ENCODE measurements at regions of chr19 and their contacts with region 1.

Region 1: GRCh38 chr19:17075035-17075863 is at the starts of genes HAUS8 and MYO9B:
- DNase-seq: peak; percentile 99 to 100
- H3K4me3 ChIP-seq: peak within 1 kb of the TSS; percentile 78 to 93 (median 86)
- H3K27ac ChIP-seq: peak within 1 kb of the TSS; percentile 91 to 95 (median 92)
- H3K4me1 ChIP-seq: peaks cover 38 to 60% (median 52%) of the 10 kb centered on the region in 4 donors
- H3K27me3 ChIP-seq: no peaks in the 10 kb centered on the region
- CTCF ChIP-seq: no peak
- EP300 ChIP-seq: no peak
- POLR2A ChIP-seq: peak in 1 of 4 donors; percentile 26
- total RNA-seq, gene HAUS8: 0.45 to 27.2 (median 8.3) TPM
- total RNA-seq, gene MYO9B: 43.0 to 265 (median 156) TPM

Region 2: DNA sequence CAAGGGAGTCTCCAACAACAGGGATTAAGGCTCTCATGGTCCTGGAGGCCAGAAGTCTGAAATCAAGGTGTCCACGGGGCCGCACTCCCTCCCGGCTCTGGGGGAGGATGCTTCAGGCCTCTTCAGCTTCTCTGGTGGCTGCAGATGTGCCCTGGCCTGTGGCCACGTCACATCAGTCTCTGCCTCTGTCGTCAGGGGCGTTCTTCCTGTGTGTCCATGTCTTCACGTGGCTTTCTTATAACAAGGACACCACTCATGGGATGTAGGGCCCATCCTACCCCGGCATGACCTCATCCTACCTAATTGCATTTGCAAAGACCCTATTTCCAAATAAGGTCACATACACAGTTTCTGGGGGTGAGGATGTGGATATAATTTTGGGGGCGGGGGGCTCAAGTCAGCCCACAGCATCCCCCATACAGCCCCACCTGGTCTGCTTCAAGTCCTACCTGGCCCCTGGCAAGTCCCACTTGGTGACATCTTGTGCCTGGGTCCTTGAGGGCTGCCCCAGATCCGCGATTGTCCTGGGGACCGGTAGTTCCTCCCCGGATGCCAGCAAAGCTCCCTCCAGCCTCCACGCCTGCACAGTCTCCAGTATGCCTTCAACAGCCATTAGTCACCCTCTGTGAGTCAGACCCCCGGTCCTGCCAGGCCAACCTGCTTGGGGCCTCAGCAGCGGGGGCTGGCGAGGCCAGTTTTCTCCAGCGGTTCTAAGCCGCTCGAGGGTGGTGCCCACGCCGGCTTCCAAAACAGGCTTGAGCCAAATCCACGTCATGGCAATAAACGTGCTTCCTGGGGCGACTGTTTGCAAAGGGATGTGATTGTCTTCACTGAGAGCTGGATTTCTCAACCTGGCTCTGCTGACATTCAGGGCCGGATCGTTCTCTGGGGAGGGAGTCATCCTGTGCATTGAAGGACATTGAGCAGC is 32.5 kb after region 1 on chr19:
- intact Hi-C with region 1: no loop called
- DNase-seq: peak; percentile 73 to 83
- H3K4me3 ChIP-seq: peak overlapping the region in 1 of 4 donors; percentile 4
- H3K27ac ChIP-seq: peak overlapping the region; percentile 66 to 87 (median 84)
- H3K4me1 ChIP-seq: peaks cover 20 to 66% (median 30%) of the 10 kb centered on the region in 4 donors
- H3K27me3 ChIP-seq: no peaks in the 10 kb centered on the region
- CTCF ChIP-seq: no peak
- EP300 ChIP-seq: peak; percentile 27
- POLR2A ChIP-seq: no peak

Region 3: DNA sequence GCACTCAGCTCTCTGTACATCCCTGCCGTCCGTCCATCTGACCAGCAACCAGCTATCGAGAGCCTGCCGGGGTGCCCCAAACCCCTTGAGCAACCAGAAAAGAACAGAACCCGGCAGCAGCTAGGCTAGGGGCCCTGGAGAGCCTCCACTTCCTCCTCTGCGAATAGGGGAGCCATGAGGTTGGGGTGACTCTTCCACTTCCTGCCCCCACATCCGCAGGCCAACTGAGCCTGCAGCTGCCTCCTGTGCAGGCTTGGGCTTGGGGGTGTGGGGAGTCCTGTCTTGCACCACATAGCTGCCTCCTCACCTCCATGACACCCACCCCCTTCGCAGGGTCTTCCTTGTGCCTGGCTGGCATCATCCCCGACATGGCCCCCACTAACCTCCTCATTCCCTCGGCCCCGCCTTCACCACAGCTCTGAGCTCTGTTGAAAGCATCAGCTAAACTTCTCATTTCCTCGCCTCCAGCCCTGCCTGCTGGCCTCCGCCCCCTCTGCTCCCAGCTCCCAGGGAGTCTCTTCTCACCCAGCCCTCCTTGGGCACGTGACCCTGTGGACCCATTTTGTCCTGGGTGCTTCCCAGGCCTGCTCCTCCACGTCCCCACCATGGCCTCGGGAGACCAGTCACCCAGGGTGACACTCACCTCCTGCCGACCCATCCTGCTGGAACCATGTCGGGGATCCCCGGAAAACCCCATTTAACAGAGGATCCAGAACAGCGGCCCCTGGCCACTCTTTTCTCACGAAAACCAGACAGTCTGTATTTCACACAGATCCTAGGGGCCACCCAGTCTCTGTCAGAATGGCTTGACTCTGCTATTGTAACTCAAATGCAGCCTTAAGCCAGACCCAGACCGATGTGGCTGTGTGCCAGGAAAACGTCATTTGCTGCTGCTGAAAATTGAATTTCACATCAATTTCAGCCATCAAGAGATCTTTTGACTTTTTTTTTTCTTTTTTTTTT is 50.7 kb after region 1 on chr19:
- intact Hi-C with region 1: loop called (anchors 10 kb)
- DNase-seq: peak; percentile 47 to 83
- H3K4me3 ChIP-seq: peak overlapping the region in 2 of 4 donors; percentile 8 to 17
- H3K27ac ChIP-seq: peak overlapping the region; percentile 20 to 82 (median 77)
- H3K4me1 ChIP-seq: peaks cover 0 to 51% (median 11%) of the 10 kb centered on the region in 4 donors
- H3K27me3 ChIP-seq: no peaks in the 10 kb centered on the region
- CTCF ChIP-seq: no peak
- EP300 ChIP-seq: no peak
- POLR2A ChIP-seq: no peak

Region 4: GRCh38 chr19:17275461-17276175 is 200.4 kb after region 1 on chr19:
- intact Hi-C with region 1: loop called (anchors 5 kb)
- DNase-seq: no peak
- H3K4me3 ChIP-seq: no peak overlapping the region
- H3K27ac ChIP-seq: no peak overlapping the region
- H3K4me1 ChIP-seq: no peaks in the 10 kb centered on the region
- H3K27me3 ChIP-seq: no peaks in the 10 kb centered on the region
- CTCF ChIP-seq: no peak
- EP300 ChIP-seq: no peak
- POLR2A ChIP-seq: no peak